Breast epithelium (tissue), 4 donors: ENCODE measurements at regions of chr3 and their contacts with region 1.

Region 1: DNA sequence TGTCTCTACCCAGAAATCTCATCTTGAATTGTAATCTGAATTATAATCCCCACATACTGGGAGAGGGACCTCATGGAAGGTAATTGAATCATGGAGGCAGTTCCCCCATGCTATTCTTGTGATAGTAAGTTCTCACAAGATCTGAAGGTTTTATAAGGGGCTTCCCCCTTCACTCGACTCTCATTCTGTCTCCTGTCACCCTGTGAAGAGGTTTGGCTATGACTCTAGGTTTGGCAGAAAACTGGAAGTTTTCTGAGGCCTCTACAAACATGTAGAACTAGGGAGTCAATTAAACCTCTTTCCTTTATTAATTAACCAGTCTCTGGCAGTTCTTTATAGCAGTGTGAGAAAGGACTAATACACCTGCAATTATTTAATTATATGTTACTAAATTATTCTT is 125.2 kb upstream of the TGFBR2 start:
- DNase-seq: no peak
- H3K4me3 ChIP-seq: no peak overlapping the region
- H3K27ac ChIP-seq: peak overlapping the region in 1 of 2 donors; percentile 15
- H3K4me1 ChIP-seq: peaks cover 0 to 4% of the 10 kb centered on the region in 2 donors
- H3K27me3 ChIP-seq: no peaks in the 10 kb centered on the region
- CTCF ChIP-seq: no peak
- POLR2A ChIP-seq: no peak

Region 2: GRCh38 chr3:30467596-30468238 is 13.5 kb before region 1 on chr3:
- intact Hi-C with region 1: loop called (anchors 1 kb)
- DNase-seq: no peak
- H3K4me3 ChIP-seq: no peak overlapping the region
- H3K27ac ChIP-seq: no peak overlapping the region
- H3K4me1 ChIP-seq: peaks cover 0 to 3% of the 10 kb centered on the region in 2 donors
- H3K27me3 ChIP-seq: no peaks in the 10 kb centered on the region
- CTCF ChIP-seq: no peak
- POLR2A ChIP-seq: no peak

Region 3: DNA sequence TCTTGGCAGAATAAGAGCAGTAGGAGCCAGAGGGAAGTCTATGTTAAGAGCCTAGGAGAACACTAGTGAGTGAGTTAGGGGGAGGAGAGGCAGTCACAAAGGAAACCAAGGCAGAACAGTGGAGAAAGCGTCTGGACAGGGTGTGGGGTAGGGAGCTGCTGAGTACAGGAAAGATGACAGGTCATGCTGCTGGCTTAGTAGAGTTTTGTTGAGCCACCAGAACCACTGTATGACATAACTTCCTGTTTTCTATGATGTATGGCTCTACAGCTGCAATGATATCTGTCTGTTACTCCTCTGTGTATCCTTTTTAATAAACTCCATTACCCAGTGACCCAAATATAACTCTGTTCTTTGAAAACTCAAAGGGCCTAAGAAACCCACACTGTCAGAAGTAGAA is 1040.9 kb after region 1 on chr3:
- intact Hi-C with region 1: no loop called
- DNase-seq: no peak
- H3K4me3 ChIP-seq: no peak overlapping the region
- H3K27ac ChIP-seq: no peak overlapping the region
- H3K4me1 ChIP-seq: no peaks in the 10 kb centered on the region
- H3K27me3 ChIP-seq: no peaks in the 10 kb centered on the region
- CTCF ChIP-seq: no peak
- POLR2A ChIP-seq: no peak